ENCODE measurements at regions of chr12 and their contacts with region 1.

Region 1: DNA sequence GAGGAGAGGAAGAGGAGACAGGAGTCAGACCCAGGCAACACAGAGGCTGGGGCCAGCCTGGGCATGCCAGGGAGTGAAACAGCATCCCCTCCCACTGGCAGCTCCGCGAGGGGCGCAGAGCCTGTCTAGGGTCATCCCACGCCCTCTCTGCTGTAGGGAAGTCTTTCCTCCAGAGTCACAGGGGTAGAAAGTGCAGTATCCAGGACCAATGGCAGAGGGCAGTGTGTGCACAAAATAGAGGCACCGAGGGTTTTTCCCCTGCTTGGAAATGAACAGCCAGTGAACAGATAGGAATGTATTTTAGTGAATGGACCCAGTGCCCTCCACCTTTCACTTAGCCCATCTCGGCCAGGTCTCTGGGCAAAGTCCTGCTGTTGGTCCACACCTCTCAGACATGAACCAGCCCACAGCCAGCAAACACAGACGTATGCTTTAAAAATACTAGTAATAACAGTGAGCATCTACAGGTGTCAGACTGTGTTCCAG is 9.4 kb upstream of the KRT74 start:
- DNase-seq: peak; percentile 53 to 80
- H3K4me3 ChIP-seq: no peak overlapping the region
- H3K27ac ChIP-seq: no peak overlapping the region
- H3K4me1 ChIP-seq: peaks cover 19% of the 10 kb centered on the region
- H3K27me3 ChIP-seq: no peaks in the 10 kb centered on the region
- CTCF ChIP-seq: peak; percentile 85

Region 2: DNA sequence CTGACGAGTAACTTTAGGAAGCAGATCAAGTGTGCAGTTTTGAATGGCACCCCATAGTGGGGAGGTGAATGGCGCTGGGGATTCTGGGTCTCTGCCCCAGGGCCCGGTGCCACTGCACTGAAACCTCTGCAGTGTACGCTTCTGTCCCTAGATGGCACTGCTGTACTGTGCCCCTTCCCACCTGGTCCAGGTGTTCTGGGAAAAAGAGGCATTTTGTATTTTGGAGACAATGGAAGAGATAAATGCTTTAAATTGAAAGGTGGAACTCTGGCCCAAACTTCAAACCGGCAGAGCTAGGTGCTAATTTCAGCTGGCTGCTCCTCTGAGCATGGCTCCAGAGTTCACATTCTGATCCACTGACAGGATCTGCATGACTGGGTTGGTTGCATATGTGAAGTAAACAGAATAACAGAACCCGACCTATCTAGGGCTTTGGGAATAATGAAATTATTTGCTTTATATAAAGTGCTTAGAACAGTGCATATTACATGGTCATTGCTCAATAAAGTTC is 443.4 kb before region 1 on chr12:
- CTCF ChIA-PET with region 1: interaction called, 6 read pairs
- POLR2A ChIA-PET with region 1: no interaction called
- intact Hi-C with region 1: loop called (anchors 2 kb)
- DNase-seq: peak; percentile 62 to 78
- H3K4me3 ChIP-seq: no peak overlapping the region
- H3K27ac ChIP-seq: no peak overlapping the region
- H3K4me1 ChIP-seq: peaks cover 22% of the 10 kb centered on the region
- H3K27me3 ChIP-seq: no peaks in the 10 kb centered on the region
- CTCF ChIP-seq: peak; percentile 94

Region 3: GRCh38 chr12:52372216-52373154 is 210.5 kb before region 1 on chr12:
- CTCF ChIA-PET with region 1: no interaction called
- POLR2A ChIA-PET with region 1: no interaction called
- intact Hi-C with region 1: loop called (anchors 1 kb)
- DNase-seq: peak; percentile 73 to 84
- H3K4me3 ChIP-seq: no peak overlapping the region
- H3K27ac ChIP-seq: no peak overlapping the region
- H3K4me1 ChIP-seq: peaks cover 9% of the 10 kb centered on the region
- H3K27me3 ChIP-seq: no peaks in the 10 kb centered on the region
- CTCF ChIP-seq: peak; percentile 90

Region 4: GRCh38 chr12:52442600-52443061 is 140.4 kb before region 1 on chr12:
- CTCF ChIA-PET with region 1: interaction called, 3 read pairs
- POLR2A ChIA-PET with region 1: no interaction called
- intact Hi-C with region 1: loop called (anchors 1 kb)
- DNase-seq: peak; percentile 82 to 92
- H3K4me3 ChIP-seq: peak overlapping the region; percentile 17; the same call in 1 of the 2 replicates
- H3K27ac ChIP-seq: peak overlapping the region; percentile 97
- H3K4me1 ChIP-seq: peaks cover 74% of the 10 kb centered on the region
- H3K27me3 ChIP-seq: no peaks in the 10 kb centered on the region
- CTCF ChIP-seq: no peak; the same call in 1 of the 2 replicates

Region 5: GRCh38 chr12:52522346-52523011 is 60.5 kb before region 1 on chr12:
- CTCF ChIA-PET with region 1: interaction called, 4 read pairs
- POLR2A ChIA-PET with region 1: no interaction called
- intact Hi-C with region 1: loop called (anchors 1 kb)
- DNase-seq: peak; percentile 78 to 87
- H3K4me3 ChIP-seq: peak overlapping the region; percentile 31; the same call in 1 of the 2 replicates
- H3K27ac ChIP-seq: peak overlapping the region; percentile 96
- H3K4me1 ChIP-seq: peaks cover 66% of the 10 kb centered on the region
- H3K27me3 ChIP-seq: no peaks in the 10 kb centered on the region
- CTCF ChIP-seq: no peak

Region 6: GRCh38 chr12:52879394-52880351 is 296.7 kb after region 1 on chr12:
- CTCF ChIA-PET with region 1: interaction called, 7 read pairs
- POLR2A ChIA-PET with region 1: no interaction called
- intact Hi-C with region 1: loop called (anchors 1 kb)
- DNase-seq: peak; percentile 80 to 81
- H3K4me3 ChIP-seq: peak overlapping the region; percentile 31; the same call in 1 of the 2 replicates
- H3K27ac ChIP-seq: peak overlapping the region; percentile 51
- H3K4me1 ChIP-seq: peaks cover 19% of the 10 kb centered on the region
- H3K27me3 ChIP-seq: no peaks in the 10 kb centered on the region
- CTCF ChIP-seq: peak; percentile 86

Region 7: GRCh38 chr12:53670299-53670698 is 1087.3 kb after region 1 on chr12:
- CTCF ChIA-PET with region 1: no interaction called
- POLR2A ChIA-PET with region 1: no interaction called
- intact Hi-C with region 1: no loop called
- DNase-seq: no peak
- H3K4me3 ChIP-seq: no peak overlapping the region
- H3K27ac ChIP-seq: no peak overlapping the region
- H3K4me1 ChIP-seq: peaks cover 9% of the 10 kb centered on the region; the same call in 1 of the 2 replicates
- H3K27me3 ChIP-seq: no peaks in the 10 kb centered on the region
- CTCF ChIP-seq: no peak

Measured in PC-9 (cell line).